ENCODE measurements at regions of chr4 and their contacts with region 1.

Region 1: GRCh38 chr4:21819086-21819485 is 129.5 kb downstream of the KCNIP4 start:
- DNase-seq: no peak
- ATAC-seq: no peak

Region 2: GRCh38 chr4:21320034-21320433 is 499.1 kb before region 1 on chr4:
- intact Hi-C with region 1: loop called (anchors 5 kb)
- DNase-seq: no peak
- ATAC-seq: no peak

Region 3: GRCh38 chr4:23202712-23203247 is 1383.7 kb after region 1 on chr4:
- intact Hi-C with region 1: no loop called
- DNase-seq: no peak
- ATAC-seq: no peak